Esophagus muscularis mucosa (tissue), 4 donors: ENCODE measurements at regions of chr9 and their contacts with region 1.

Region 1: GRCh38 chr9:129714511-129715061 is 38.3 kb downstream of the PTGES start:
- DNase-seq: no peak
- H3K4me3 ChIP-seq: no peak overlapping the region
- H3K27ac ChIP-seq: peak overlapping the region in 3 of 4 donors; percentile 26 to 69 (median 66)
- H3K4me1 ChIP-seq: peaks cover 12 to 71% (median 58%) of the 10 kb centered on the region in 4 donors
- H3K27me3 ChIP-seq: no peaks in the 10 kb centered on the region
- CTCF ChIP-seq: no peak
- EP300 ChIP-seq: no peak
- POLR2A ChIP-seq: no peak

Region 2: GRCh38 chr9:129665389-129665775 is 49.2 kb before region 1 on chr9 and contains the start of gene PRRX2:
- intact Hi-C with region 1: loop called (anchors 5 kb)
- DNase-seq: no peak
- H3K4me3 ChIP-seq: peak within 1 kb of the TSS; percentile 46 to 65 (median 56)
- H3K27ac ChIP-seq: peak within 1 kb of the TSS; percentile 23 to 57 (median 38)
- H3K4me1 ChIP-seq: peaks cover 8 to 28% (median 22%) of the 10 kb centered on the region in 4 donors
- H3K27me3 ChIP-seq: peaks cover 0 to 51% (median 8%) of the 10 kb centered on the region in 4 donors
- CTCF ChIP-seq: no peak
- EP300 ChIP-seq: no peak
- POLR2A ChIP-seq: no peak
- total RNA-seq, gene PRRX2: 1.7 to 13.1 (median 6.2) TPM

Region 3: DNA sequence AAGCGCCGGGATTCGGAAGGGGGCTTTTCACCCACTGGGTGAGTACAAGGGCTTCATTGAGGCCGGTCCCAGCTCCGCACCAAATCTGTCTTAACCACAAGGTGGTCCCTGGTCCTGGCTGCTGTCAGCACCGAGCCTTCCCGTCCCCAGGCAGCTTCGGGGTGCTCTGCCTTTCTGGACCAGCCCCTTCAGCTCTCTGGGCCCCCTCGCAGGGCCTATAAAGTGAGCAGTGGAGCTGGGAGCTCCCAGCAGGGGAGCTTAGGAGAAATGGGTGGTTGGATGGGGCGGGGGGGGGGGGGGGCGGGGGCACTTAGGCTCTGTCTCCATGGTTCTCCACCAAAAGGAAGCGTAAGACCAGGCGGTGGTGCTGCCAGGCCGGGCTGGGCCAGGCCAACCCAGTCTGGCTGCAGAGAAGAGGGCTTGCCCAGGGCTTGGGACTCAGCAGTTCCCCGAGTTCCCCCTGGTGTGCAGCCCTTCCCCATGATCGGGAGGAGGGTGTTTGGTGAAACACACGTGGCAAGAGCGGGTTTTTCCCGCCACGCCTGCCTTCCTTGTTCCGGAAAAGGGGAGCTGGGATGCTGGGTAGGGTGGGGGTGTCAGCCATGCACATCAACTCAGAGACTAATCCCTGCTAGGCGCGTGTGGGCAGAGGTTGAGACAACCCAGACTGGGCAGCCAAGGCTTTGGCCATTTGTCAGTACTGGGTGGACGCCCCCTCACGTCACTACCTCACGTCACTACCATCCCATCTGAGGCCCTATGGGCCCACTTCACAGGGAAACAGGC is 16.4 kb before region 1 on chr9:
- intact Hi-C with region 1: loop called (anchors 2 kb)
- DNase-seq: no peak
- H3K4me3 ChIP-seq: peak overlapping the region; percentile 50 to 68 (median 56)
- H3K27ac ChIP-seq: peak overlapping the region; percentile 66 to 78 (median 76)
- H3K4me1 ChIP-seq: peaks cover 14 to 38% (median 35%) of the 10 kb centered on the region in 4 donors
- H3K27me3 ChIP-seq: peaks cover 0 to 44% (median 0%) of the 10 kb centered on the region in 4 donors
- CTCF ChIP-seq: no peak
- EP300 ChIP-seq: no peak
- POLR2A ChIP-seq: no peak

Region 4: GRCh38 chr9:129811967-129812363 is 97.4 kb after region 1 on chr9:
- intact Hi-C with region 1: no loop called
- DNase-seq: no peak
- H3K4me3 ChIP-seq: no peak overlapping the region
- H3K27ac ChIP-seq: no peak overlapping the region
- H3K4me1 ChIP-seq: no peaks in the 10 kb centered on the region
- H3K27me3 ChIP-seq: no peaks in the 10 kb centered on the region
- CTCF ChIP-seq: no peak
- EP300 ChIP-seq: no peak
- POLR2A ChIP-seq: no peak